B cell (primary cell): ENCODE measurements at regions of chr12 and their contacts with region 1.

Region 1: DNA sequence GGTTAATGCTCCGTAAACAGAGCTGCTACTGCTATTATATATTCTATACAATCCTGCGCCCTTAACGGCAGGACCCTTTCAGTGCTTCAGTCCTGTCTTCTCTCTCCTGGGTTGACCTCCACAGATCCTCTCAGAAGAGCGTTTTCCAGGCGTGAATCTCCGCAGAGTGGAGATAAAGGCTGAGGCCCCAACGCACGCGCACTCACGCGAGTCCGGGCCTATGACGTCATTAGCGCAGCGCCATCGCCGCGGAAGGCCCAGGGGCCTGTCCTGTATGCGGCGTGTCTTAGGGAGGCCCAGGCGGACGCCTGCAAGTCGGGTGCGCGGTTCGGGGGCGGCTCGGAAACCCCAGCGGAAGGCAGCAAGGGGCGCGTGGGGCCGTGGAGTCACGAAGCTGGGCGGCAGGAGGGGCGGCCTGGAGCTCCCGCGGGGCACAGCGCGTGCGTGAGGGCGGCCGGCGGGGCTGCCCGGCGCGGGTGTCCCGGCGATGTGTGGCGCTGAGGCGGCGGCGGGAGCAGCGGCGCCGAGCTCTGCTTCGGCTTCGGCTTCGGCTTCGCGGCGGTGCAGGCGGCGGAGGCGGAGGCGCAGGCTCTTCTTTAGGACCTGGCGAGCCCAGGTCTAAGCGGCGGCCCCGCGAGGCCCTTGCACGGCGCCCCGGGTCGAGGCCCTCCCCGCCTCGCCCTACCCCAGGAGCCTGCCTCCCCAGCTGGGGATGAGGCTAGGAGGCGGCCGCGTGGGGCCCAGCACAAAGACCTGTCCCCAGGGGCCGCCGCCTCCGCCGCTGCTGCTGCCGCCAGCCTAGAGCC is at the start of gene MAPKAPK5:
- DNase-seq: peak; percentile 99
- ATAC-seq: peak; percentile 91
- H3K4me3 ChIP-seq: peak within 1 kb of the TSS; percentile 81 to 99 (median 82)
- H3K4me3 Mint-ChIP-seq: peak within 1 kb of the TSS; percentile 94
- H3K27ac ChIP-seq: peak within 1 kb of the TSS; percentile 85 to 87
- H3K27ac Mint-ChIP-seq: peak within 1 kb of the TSS; percentile 99
- H3K4me1 ChIP-seq: peaks cover 28 to 29% of the 10 kb centered on the region in 2 donors
- H3K4me1 Mint-ChIP-seq: peaks cover 50% of the 10 kb centered on the region
- H3K27me3 ChIP-seq: no peaks in the 10 kb centered on the region
- H3K27me3 Mint-ChIP-seq: no peaks in the 10 kb centered on the region
- CTCF ChIP-seq: no peak
- total RNA-seq, gene MAPKAPK5: 64.4 and 73.1 TPM in 2 replicates

Region 2: GRCh38 chr12:110023059-110023606 is 1818.8 kb before region 1 on chr12:
- CTCF ChIA-PET with region 1: no interaction called
- POLR2A ChIA-PET with region 1: no interaction called
- intact Hi-C with region 1: no loop called
- DNase-seq: no peak
- ATAC-seq: no peak
- H3K4me3 ChIP-seq: no peak overlapping the region
- H3K4me3 Mint-ChIP-seq: no peak overlapping the region
- H3K27ac ChIP-seq: no peak overlapping the region
- H3K27ac Mint-ChIP-seq: peak overlapping the region; percentile 20
- H3K4me1 ChIP-seq: peaks cover 0 to 6% of the 10 kb centered on the region in 2 donors
- H3K4me1 Mint-ChIP-seq: peaks cover 12% of the 10 kb centered on the region
- H3K27me3 ChIP-seq: no peaks in the 10 kb centered on the region
- H3K27me3 Mint-ChIP-seq: no peaks in the 10 kb centered on the region
- CTCF ChIP-seq: no peak

Region 3: GRCh38 chr12:110639336-110640141 is 1202.4 kb before region 1 on chr12:
- CTCF ChIA-PET with region 1: no interaction called
- POLR2A ChIA-PET with region 1: no interaction called
- intact Hi-C with region 1: no loop called
- DNase-seq: no peak
- ATAC-seq: peak; percentile 39
- H3K4me3 ChIP-seq: no peak overlapping the region
- H3K4me3 Mint-ChIP-seq: peak overlapping the region; percentile 53
- H3K27ac ChIP-seq: peak overlapping the region in 1 of 2 donors; percentile 90
- H3K27ac Mint-ChIP-seq: peak overlapping the region; percentile 98
- H3K4me1 ChIP-seq: peaks cover 87 to 98% of the 10 kb centered on the region in 2 donors
- H3K4me1 Mint-ChIP-seq: peaks cover 89% of the 10 kb centered on the region
- H3K27me3 ChIP-seq: no peaks in the 10 kb centered on the region
- H3K27me3 Mint-ChIP-seq: no peaks in the 10 kb centered on the region
- CTCF ChIP-seq: no peak

Region 4: DNA sequence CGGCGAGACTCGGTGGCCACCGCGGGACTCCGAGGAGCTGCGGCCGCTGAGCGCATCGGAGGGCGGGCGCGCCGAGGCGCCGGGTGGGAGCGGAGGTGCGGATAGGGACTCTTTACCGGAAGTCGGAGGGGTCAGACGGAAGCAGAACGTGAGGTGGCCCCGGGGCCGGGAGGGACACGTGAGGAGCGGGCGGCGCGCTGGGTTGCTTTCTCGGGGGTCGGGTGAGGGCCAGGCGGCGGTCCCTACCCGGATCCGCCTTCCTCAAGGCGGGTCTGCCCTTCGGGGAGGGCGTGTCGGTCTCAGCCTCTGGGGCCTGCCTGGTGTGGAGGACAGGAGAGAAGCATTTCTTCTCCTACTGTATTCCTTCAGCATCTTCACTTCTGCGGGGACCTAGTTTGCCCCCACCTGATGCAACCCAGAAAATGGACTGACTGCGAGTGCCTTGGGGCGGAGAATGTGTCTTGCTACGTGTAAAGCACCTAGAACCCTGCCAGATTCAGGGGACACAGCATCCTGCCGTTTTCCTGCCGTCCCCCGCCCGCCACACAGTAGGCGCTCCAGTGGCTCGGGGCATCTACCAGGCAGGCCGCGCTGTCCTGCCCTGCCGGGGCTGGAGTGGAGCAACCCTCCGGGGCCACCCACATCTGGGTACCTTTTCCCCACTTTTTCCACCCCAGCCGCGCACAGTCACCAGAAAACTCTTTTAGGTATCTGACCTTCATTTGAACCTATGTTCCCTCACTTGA is 242.3 kb before region 1 on chr12:
- CTCF ChIA-PET with region 1: no interaction called
- POLR2A ChIA-PET with region 1: no interaction called
- intact Hi-C with region 1: loop called (anchors 2 kb)
- DNase-seq: peak; percentile 97
- ATAC-seq: peak; percentile 77
- H3K4me3 ChIP-seq: peak overlapping the region; percentile 60 to 92 (median 85)
- H3K4me3 Mint-ChIP-seq: peak overlapping the region; percentile 90
- H3K27ac ChIP-seq: peak overlapping the region; percentile 75 to 87
- H3K27ac Mint-ChIP-seq: peak overlapping the region; percentile 96
- H3K4me1 ChIP-seq: peaks cover 15% of the 10 kb centered on the region in 2 donors
- H3K4me1 Mint-ChIP-seq: peaks cover 28% of the 10 kb centered on the region
- H3K27me3 ChIP-seq: no peaks in the 10 kb centered on the region
- H3K27me3 Mint-ChIP-seq: no peaks in the 10 kb centered on the region
- CTCF ChIP-seq: no peak

Region 5: DNA sequence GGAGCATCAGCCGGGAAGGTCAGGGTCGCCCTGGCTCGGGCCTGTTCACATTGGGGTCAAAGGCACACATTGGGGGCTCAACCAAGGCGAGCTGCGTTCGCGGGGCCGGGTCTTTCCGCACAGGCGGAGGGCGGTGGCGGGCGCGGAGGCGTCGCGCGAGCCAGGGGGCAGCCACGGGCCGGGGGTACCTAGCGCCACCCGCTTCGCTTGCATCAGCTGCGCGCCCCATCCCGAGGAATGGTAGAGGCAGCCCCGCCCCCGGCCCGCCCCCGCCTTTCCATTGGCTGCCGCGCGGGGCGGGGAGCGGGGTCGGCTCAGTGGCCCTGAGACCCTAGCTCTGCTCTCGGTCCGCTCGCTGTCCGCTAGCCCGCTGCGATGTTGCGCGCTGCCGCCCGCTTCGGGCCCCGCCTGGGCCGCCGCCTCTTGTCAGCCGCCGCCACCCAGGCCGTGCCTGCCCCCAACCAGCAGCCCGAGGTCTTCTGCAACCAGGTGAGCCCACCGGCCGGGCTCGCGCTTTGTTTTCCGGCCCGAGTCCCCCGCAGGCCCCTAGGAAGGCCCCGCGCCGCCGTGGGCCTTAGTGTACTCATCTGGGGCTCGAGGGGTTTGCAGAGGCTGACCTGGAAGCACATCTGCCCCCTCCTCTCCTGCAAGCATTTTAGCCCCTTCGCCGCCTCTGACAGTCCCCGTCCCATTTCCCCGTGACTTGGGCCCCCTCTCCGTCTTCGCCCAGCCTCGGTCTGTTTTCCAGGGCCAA is 75.2 kb before region 1 on chr12 and contains the start of gene ALDH2:
- CTCF ChIA-PET with region 1: no interaction called
- POLR2A ChIA-PET with region 1: interaction called, 5 read pairs
- intact Hi-C with region 1: loop called (anchors 2 kb)
- DNase-seq: peak; percentile 68
- ATAC-seq: peak; percentile 79
- H3K4me3 ChIP-seq: peak within 1 kb of the TSS; percentile 2 to 74 (median 62)
- H3K4me3 Mint-ChIP-seq: peak within 1 kb of the TSS; percentile 78
- H3K27ac ChIP-seq: peak within 1 kb of the TSS in 1 of 2 donors; percentile 55
- H3K27ac Mint-ChIP-seq: peak within 1 kb of the TSS; percentile 71
- H3K4me1 ChIP-seq: peaks cover 47 to 53% of the 10 kb centered on the region in 2 donors
- H3K4me1 Mint-ChIP-seq: peaks cover 57% of the 10 kb centered on the region
- H3K27me3 ChIP-seq: no peaks in the 10 kb centered on the region
- H3K27me3 Mint-ChIP-seq: no peaks in the 10 kb centered on the region
- CTCF ChIP-seq: no peak
- total RNA-seq, gene ALDH2: 22.3 TPM in 2 replicates

Region 6: DNA sequence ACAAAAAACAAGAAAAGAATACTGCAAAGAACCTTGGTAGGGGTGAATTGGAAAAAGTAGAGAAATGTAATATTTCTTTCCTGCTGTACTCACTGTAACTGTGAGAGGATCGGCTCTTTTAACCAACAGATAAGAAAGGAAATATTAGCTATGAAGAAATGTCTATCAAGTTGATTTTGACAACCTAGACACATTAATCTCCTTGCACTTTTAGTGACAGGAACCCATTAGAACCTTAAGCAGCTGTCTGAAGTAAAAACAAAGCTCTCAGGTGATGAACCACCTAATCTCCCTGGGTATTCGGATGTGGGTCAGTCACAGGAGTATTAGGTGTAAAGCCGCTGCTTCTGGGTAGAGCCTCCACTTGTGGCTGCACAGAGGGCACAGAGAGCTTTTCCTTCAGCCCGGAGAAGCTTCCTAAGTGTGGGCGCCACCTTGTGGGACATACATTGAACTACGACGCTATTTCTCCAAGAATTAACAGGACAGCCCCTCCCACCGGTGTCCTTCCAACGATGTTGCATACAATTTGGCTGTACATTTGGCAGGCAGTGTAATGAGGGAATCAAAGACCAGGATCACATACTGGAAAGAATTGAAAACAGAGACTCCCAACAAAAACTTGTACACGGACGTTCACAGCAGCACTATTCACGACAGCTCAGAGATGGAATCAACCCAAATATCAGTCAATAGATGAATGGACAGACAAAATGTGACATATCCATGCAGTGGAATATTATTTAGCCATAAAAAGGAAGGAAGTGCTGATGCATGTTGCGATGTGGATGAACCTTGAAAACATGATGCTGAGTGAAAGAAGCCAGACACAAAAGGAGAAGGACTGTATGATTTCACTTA is 28.8 kb before region 1 on chr12:
- CTCF ChIA-PET with region 1: interaction called, 12 read pairs
- POLR2A ChIA-PET with region 1: interaction called, 3 read pairs
- intact Hi-C with region 1: no loop called
- DNase-seq: peak; percentile 84
- ATAC-seq: peak; percentile 95
- H3K4me3 ChIP-seq: no peak overlapping the region
- H3K4me3 Mint-ChIP-seq: no peak overlapping the region
- H3K27ac ChIP-seq: no peak overlapping the region
- H3K27ac Mint-ChIP-seq: no peak overlapping the region
- H3K4me1 ChIP-seq: peaks cover 0 to 3% of the 10 kb centered on the region in 2 donors
- H3K4me1 Mint-ChIP-seq: peaks cover 7% of the 10 kb centered on the region
- H3K27me3 ChIP-seq: no peaks in the 10 kb centered on the region
- H3K27me3 Mint-ChIP-seq: peaks cover 4% of the 10 kb centered on the region
- CTCF ChIP-seq: peak; percentile 85

Region 7: DNA sequence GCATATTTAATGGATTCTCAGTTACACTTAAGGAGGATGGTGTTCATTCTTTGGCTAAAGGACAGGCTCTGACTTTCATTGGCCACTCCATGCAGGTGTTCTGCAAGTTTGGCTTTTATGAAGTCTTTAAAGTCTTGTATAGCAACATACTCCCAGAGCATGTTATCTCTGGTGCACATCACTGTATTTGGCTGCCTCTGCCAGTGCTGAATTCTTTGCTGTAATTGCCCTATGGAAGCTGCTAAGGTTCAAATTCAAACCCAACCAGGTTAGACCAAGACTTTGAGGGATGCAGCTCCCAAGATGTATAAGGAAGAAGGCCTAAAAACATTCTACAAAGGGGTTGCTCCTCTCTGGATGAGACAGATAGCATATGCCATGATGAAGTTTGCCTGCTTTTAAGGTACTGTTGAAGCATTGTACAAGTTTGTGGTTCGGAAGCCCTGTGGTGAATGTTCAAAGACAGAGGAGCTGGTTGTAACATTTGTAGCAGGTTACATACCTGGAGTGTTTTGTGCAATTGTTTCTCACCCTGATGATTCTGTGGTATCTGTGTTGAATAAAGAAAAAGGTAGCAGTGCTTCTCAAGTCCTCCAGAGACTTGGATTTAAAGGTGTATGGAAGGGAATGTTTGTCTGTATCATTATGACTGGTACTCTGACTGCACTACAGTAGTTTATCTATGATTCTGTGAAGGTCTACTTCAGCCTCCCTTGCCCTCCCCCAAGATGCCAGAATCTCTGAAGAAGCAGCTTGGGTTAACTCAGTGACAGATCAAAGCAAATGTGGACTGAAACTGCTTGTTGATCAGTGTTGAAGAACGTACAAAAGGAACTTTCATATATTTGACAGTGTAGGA is 151.6 kb after region 1 on chr12:
- CTCF ChIA-PET with region 1: no interaction called
- POLR2A ChIA-PET with region 1: no interaction called
- intact Hi-C with region 1: no loop called
- DNase-seq: peak; percentile 16
- ATAC-seq: peak; percentile 10
- H3K4me3 ChIP-seq: peak overlapping the region in 2 of 5 experiments; percentile 7 to 60
- H3K4me3 Mint-ChIP-seq: peak overlapping the region; percentile 91
- H3K27ac ChIP-seq: no peak overlapping the region
- H3K27ac Mint-ChIP-seq: no peak overlapping the region
- H3K4me1 ChIP-seq: peaks cover 42 to 45% of the 10 kb centered on the region in 2 donors
- H3K4me1 Mint-ChIP-seq: peaks cover 42% of the 10 kb centered on the region
- H3K27me3 ChIP-seq: peaks cover 0 to 17% (median 12%) of the 10 kb centered on the region in 4 experiments
- H3K27me3 Mint-ChIP-seq: peaks cover 26% of the 10 kb centered on the region
- CTCF ChIP-seq: no peak

Region 8: DNA sequence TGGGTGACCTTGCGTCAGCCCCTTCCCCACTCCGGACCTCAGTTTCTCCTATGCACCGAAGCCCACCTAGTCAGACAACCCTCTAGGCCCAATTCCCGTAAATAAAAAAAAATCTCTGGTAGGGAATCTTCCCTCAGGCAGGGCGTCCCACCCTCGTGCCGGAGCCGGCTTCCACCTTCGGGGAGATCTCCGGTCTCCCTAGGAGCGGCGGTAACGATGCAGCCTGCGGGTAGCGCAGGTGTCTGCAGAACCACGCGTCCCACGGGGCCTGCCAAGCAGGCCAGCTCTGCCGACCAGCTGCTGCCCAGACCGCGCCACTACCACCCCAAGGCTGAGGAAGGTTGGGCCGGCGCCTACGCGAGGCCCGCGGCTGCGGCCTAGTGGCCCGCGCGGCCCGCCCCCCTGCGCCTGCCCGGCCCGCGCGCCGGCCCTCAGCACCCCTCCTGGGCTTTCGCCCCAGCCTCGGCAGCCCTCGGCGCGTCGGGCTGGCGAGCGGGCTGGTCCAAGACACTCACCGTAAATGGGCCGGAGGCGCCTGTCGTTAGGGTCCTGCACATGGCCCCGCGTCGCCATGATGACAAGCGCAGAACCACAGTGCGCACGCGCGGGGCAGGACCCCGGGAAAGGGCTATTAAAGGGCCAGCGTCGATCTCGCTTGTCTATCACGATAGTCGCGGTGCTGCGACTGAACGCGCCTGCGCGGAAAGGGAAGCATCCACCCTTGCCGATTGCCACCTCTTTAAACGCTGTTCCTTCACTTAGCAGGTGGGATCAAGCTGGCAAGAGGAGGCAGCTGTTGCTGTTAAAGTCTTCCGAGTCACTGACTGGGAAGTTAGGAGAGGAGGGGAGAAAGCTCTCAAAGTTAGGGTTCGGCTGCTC is 266.5 kb after region 1 on chr12 and contains the start of gene NAA25:
- CTCF ChIA-PET with region 1: no interaction called
- POLR2A ChIA-PET with region 1: no interaction called
- intact Hi-C with region 1: loop called (anchors 2 kb)
- DNase-seq: peak; percentile 91
- ATAC-seq: peak; percentile 72
- H3K4me3 ChIP-seq: peak within 1 kb of the TSS; percentile 84 to 100 (median 97)
- H3K4me3 Mint-ChIP-seq: peak within 1 kb of the TSS; percentile 99
- H3K27ac ChIP-seq: peak within 1 kb of the TSS; percentile 81 to 88
- H3K27ac Mint-ChIP-seq: peak within 1 kb of the TSS; percentile 99
- H3K4me1 ChIP-seq: peaks cover 25 to 29% of the 10 kb centered on the region in 2 donors
- H3K4me1 Mint-ChIP-seq: peaks cover 39% of the 10 kb centered on the region
- H3K27me3 ChIP-seq: no peaks in the 10 kb centered on the region
- H3K27me3 Mint-ChIP-seq: no peaks in the 10 kb centered on the region
- CTCF ChIP-seq: no peak
- total RNA-seq, gene NAA25: 36.5 and 40.8 TPM in 2 replicates